Activated B cell treated with CpG ODN at 0.5 μM for 24 hours (primary cell): ENCODE measurements at regions of chr21 and their contacts with region 1.

Region 1: GRCh38 chr21:39263372-39263771 is 50.1 kb downstream of the BRWD1 start:
- DNase-seq: no peak
- ATAC-seq: no peak
- H3K4me3 Mint-ChIP-seq: no peak overlapping the region
- H3K27ac Mint-ChIP-seq: no peak overlapping the region
- H3K4me1 Mint-ChIP-seq: peaks cover 6% of the 10 kb centered on the region
- H3K27me3 Mint-ChIP-seq: no peaks in the 10 kb centered on the region
- CTCF ChIP-seq: no peak

Region 2: GRCh38 chr21:39296891-39297290 is 33.5 kb after region 1 on chr21:
- CTCF ChIA-PET with region 1: no interaction called
- POLR2A ChIA-PET with region 1: no interaction called
- intact Hi-C with region 1: loop called (anchors 5 kb)
- DNase-seq: no peak
- ATAC-seq: no peak
- H3K4me3 Mint-ChIP-seq: no peak overlapping the region
- H3K27ac Mint-ChIP-seq: no peak overlapping the region
- H3K4me1 Mint-ChIP-seq: peaks cover 9% of the 10 kb centered on the region
- H3K27me3 Mint-ChIP-seq: no peaks in the 10 kb centered on the region
- CTCF ChIP-seq: no peak